Right ventricle myocardium superior (tissue), 1 donor: ENCODE measurements at regions of chr5 and their contacts with region 1.

Region 1: DNA sequence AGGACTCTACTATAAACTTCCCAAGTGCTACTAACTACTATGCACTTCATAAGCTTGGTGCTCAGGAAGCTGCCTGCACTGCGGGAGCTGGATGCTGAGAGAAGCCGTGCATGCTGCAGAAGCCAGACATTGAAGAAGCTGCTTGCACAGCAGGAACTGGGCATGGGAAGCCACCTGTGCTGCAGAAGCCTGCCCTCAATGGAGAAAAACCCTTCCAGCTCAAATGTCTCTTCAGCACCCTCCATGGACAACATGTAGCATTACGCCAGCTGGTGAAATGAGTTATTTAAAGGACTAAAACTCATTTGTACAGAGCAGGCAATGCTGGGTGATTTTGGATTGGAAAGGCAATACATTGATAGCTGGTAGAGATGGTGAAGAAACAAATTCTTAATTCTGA is 247.2 kb downstream of the KIF4B start:
- DNase-seq: no peak
- ATAC-seq: peak; percentile 66

Region 2: GRCh38 chr5:154972476-154973080 is 288.2 kb before region 1 on chr5:
- intact Hi-C with region 1: loop called (anchors 10 kb)
- DNase-seq: no peak
- ATAC-seq: peak; percentile 85